Activated CD4-positive, alpha-beta memory T cell treated with anti-CD3 and anti-CD28 coated beads for 36 hours (primary cell): ENCODE measurements at regions of chr13 and their contacts with region 1.

Region 1: DNA sequence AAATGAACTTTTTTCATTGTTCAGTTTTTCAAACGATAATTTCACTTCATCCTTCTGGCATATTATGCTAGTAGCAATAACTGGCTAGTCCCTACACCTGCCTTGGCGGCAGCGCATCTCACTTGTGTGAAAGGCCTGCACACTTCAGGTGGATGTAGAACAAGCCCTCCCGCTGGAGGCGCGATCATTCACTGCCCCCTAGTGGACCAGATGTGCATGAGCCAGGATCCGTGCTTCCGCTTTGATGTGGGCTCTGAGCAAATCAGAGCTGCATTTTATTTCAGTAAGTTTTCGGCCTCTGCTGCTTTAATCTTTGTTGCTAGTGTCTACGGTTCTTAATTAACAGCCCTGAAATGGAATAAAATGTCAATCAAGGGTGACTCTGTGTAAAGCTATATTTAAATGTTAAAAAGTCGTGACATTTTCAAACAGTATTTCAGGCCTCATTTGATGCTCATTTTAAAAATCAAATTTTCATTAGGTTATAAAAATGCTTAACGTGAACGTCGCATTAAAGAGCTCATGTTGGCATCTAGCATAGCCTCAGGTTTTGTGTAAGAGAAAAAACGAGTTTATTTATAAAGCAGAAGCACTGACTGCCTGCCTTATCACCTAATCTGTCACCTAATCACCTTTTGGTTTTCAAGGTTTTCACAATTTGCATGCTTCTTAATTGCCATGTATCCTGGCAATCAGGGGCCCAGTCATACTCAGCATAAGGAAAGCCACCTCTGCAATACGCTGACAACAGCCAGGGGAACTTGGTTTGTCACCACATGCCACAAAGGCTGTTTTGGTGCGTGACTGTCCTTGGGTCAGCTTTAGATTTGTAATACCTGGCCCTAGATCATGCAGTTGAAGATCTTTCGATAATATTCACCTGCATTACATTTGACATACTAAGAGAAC is 112.2 kb downstream of the TEX26 start:
- DNase-seq: peak; percentile 91
- H3K4me3 Mint-ChIP-seq: no peak overlapping the region
- H3K27ac Mint-ChIP-seq: peak overlapping the region; percentile 93
- H3K4me1 Mint-ChIP-seq: peaks cover 48% of the 10 kb centered on the region
- H3K27me3 Mint-ChIP-seq: peaks cover 3% of the 10 kb centered on the region

Region 2: DNA sequence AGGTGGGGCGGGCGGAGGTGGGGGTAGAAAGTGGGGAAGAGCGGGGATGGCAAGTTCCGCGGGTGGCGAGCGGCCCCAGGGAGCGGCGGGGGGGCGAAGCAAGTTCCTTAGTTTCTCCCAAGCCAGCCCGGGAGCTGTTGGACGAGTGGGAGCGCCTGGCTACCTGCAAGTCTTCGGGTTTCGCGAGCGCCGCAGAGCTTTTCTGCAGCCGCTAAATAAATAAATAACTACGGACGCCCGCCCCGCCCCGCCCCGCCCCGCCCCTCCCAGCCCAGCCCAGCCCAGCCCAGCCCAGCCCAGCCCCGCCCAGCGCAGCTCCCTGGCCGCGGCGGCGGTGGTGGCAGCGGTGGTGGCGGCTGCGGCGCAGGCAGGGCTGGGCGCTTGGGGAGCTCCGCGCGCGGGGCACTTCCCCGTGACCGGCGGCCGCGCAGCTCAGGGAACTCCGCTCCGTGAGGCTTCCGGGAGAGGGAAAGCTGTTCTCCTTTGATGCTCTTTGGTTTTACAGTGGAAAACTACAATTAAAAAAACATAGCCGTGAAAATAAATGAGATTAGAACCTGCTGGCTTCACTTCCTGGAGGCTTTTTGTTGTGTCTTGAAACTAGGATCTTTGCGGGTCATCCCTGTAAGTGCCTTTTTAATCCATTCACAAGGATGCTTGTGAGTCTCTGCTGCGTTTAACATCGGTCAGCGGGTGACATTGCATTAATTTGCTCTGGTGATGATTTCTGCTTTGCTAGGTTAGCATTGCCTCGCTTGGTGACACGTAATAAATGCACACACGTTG is 622.4 kb before region 1 on chr13 and contains the start of gene UBE2L5:
- CTCF ChIA-PET with region 1: interaction called, 3 read pairs
- POLR2A ChIA-PET with region 1: no interaction called
- intact Hi-C with region 1: loop called (anchors 10 kb)
- DNase-seq: peak; percentile 77
- H3K4me3 Mint-ChIP-seq: peak within 1 kb of the TSS; percentile 86
- H3K27ac Mint-ChIP-seq: peak within 1 kb of the TSS; percentile 80
- H3K4me1 Mint-ChIP-seq: peaks cover 12% of the 10 kb centered on the region
- H3K27me3 Mint-ChIP-seq: no peaks in the 10 kb centered on the region
- total RNA-seq, gene UBE2L5: not detected

Region 3: GRCh38 chr13:30808589-30808988 is 236.0 kb before region 1 on chr13:
- CTCF ChIA-PET with region 1: interaction called, 10 read pairs
- POLR2A ChIA-PET with region 1: no interaction called
- intact Hi-C with region 1: loop called (anchors 2 kb)
- DNase-seq: peak; percentile 34
- H3K4me3 Mint-ChIP-seq: no peak overlapping the region
- H3K27ac Mint-ChIP-seq: no peak overlapping the region
- H3K4me1 Mint-ChIP-seq: peaks cover 12% of the 10 kb centered on the region
- H3K27me3 Mint-ChIP-seq: no peaks in the 10 kb centered on the region

Region 4: DNA sequence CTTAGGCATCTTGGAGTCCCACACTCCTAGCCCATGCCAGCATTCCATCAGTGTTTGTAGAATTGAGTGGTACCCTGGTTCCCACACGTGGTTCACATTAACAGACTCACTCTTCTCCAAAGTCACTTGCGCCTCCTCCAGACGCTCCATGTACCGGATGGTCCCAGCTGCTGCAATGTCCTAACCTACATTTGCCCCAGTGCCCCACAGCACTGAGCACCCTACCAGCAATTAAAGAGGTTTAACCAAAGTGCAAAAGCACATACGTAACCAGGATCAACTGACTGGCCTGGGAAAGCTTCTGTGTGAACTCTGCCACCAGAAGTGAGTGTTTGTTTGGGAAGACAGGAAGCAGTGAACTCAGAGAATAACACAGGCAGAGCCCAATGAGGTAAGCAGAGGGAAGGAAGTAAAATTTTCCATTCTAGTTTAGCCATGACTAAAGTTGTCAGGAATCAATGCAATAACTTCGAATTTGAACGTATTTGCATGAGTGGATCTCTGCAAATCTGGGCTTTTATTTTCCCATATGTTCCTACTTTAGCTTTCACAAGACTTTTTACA is 145.9 kb before region 1 on chr13:
- CTCF ChIA-PET with region 1: interaction called, 3 read pairs
- POLR2A ChIA-PET with region 1: no interaction called
- intact Hi-C with region 1: loop called (anchors 2 kb)
- DNase-seq: peak; percentile 35
- H3K4me3 Mint-ChIP-seq: no peak overlapping the region
- H3K27ac Mint-ChIP-seq: no peak overlapping the region
- H3K4me1 Mint-ChIP-seq: peaks cover 20% of the 10 kb centered on the region
- H3K27me3 Mint-ChIP-seq: peaks cover 23% of the 10 kb centered on the region

Region 5: DNA sequence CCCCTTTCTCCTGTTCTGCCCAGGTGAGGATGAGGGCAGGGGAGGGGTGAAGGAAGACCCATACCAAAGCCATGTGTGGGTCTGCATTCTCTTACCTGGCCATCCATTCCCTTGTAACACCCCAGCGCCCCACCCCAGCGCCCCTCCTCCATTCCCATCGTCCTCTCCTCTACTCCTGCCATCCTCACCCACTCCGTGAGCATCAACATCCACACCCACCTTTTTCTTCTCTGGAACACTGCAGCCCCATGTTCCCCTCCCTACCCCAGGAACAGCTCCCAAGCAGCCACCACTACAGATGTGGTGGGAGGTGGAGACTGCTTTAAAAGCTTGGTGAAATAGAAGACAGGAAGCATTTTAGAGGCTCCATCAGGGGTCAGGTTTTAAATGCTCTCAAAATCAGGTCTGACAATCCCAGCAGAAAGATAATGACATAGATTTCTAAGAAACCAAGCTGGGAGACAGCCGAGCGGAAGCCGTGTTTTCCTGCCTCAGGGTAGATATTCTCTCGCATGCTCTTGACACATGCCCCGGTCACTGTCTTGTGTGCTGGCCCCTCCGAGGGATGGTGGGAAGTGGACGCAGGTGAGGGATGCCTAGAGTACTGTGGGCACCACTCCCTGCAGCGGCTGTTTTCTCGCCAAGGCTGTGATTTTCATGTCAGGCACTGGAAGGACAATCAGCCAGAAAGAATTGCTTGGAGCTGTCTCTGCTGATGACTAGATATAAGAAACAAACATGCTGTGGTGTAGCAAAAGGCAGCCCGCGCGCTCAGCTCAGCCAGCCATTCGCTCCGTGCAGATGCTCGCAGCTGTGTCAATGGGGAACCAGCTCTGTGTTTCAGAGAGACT is 128.7 kb before region 1 on chr13:
- CTCF ChIA-PET with region 1: no interaction called
- POLR2A ChIA-PET with region 1: no interaction called
- intact Hi-C with region 1: no loop called
- DNase-seq: no peak
- H3K4me3 Mint-ChIP-seq: no peak overlapping the region
- H3K27ac Mint-ChIP-seq: no peak overlapping the region
- H3K4me1 Mint-ChIP-seq: no peaks in the 10 kb centered on the region
- H3K27me3 Mint-ChIP-seq: peaks cover 31% of the 10 kb centered on the region

Region 6: GRCh38 chr13:31031482-31031881 is 13.1 kb before region 1 on chr13:
- CTCF ChIA-PET with region 1: interaction called, 10 read pairs
- POLR2A ChIA-PET with region 1: interaction called, 3 read pairs
- intact Hi-C with region 1: no loop called
- DNase-seq: no peak
- H3K4me3 Mint-ChIP-seq: no peak overlapping the region
- H3K27ac Mint-ChIP-seq: no peak overlapping the region
- H3K4me1 Mint-ChIP-seq: no peaks in the 10 kb centered on the region
- H3K27me3 Mint-ChIP-seq: peaks cover 14% of the 10 kb centered on the region

Region 7: GRCh38 chr13:31199849-31200636 is 155.4 kb after region 1 on chr13 and contains the start of gene B3GLCT:
- CTCF ChIA-PET with region 1: interaction called, 4 read pairs
- POLR2A ChIA-PET with region 1: no interaction called
- intact Hi-C with region 1: loop called (anchors 2 kb)
- DNase-seq: peak; percentile 84
- H3K4me3 Mint-ChIP-seq: peak within 1 kb of the TSS; percentile 77
- H3K27ac Mint-ChIP-seq: peak within 1 kb of the TSS; percentile 78
- H3K4me1 Mint-ChIP-seq: peaks cover 26% of the 10 kb centered on the region
- H3K27me3 Mint-ChIP-seq: no peaks in the 10 kb centered on the region
- total RNA-seq, gene B3GLCT: 2.6 to 2.8 TPM